Activated CD8-positive, alpha-beta T cell treated with anti-CD3 and anti-CD28 coated beads for 36 hours (primary cell): ENCODE measurements at regions of chr13 and their contacts with region 1.

Region 1: DNA sequence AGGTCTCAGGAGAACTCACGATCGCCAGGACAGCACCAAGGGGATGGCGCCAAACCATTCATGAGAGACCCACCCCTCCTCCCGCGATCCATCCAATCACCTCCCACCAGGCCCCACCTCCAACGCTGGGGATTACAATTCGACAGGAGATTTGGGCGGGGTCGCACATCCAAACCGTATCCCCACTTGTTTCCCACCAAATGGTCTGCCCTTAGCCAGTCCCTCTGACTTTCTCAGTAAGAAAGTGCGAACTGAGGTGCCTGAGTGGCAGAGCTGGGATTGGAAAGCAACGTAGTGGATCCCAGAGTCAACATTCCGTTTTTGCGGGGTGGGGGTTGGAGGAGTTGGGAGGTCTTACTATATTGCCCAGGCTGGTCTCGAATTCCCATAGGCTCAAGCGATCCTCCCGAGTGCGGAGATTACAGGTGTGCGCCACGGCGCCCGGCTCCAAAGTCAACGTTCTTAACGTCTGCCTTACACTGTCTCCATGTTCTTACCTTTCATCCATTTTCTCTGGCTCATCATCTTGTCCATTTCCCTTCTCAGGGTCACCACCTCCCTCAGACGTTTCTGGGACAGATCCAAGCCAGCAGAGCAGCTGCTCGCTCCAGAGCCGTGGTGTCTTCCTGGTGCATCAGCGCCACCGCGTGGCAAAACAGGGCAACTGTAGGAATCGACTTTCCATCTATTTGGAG is 102.7 kb upstream of the ABCC4 start:
- DNase-seq: peak; percentile 79
- ATAC-seq: peak; percentile 93
- H3K4me3 Mint-ChIP-seq: peak overlapping the region; percentile 79
- H3K27ac Mint-ChIP-seq: no peak overlapping the region
- H3K4me1 Mint-ChIP-seq: peaks cover 6% of the 10 kb centered on the region
- H3K27me3 Mint-ChIP-seq: peaks cover 7% of the 10 kb centered on the region
- CTCF ChIP-seq: peak; percentile 93

Region 2: DNA sequence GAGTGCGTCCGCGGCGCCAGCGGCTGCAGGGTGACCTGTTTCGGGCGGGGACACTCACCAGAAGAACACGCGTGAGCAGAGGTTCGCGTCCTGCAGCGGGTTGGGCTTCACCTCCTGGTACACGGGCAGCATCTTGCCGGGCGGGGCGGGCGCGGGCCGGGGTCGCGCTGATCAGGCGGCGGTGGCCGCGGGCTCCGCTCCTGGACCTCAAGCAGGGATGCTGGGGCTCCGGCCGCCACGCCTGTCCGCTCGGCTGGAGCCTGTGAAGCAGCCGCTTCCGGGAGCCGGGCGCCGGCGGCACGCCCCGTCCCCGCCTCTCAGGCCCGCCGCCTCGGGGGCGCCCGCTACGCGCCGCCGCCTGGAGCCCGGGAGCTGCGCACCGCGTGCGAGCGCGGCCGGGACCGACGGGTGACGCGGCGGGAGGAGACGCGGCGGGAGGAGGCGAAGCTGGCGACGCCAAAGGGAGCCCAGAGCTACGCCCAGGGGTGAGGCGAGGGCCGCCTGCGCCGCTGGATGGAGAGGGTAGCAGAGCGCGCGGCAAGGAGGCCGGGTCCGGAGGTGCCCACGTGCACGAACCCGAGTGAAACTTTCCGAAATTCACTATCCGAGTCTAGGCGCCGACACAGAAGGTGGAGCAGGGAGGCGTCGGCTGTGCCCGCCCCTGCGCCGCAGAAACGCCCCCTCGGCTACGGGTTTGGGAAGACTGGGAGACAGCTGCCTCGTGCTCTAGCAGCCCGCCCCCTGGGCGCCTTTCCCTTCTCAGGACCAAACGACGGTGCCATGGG is 102.6 kb before region 1 on chr13 and contains the start of gene ABCC4:
- CTCF ChIA-PET with region 1: interaction called, 23 read pairs
- POLR2A ChIA-PET with region 1: no interaction called
- intact Hi-C with region 1: no loop called
- DNase-seq: peak; percentile 52
- ATAC-seq: peak; percentile 81
- H3K4me3 Mint-ChIP-seq: peak within 1 kb of the TSS; percentile 80
- H3K27ac Mint-ChIP-seq: peak within 1 kb of the TSS; percentile 69
- H3K4me1 Mint-ChIP-seq: peaks cover 35% of the 10 kb centered on the region
- H3K27me3 Mint-ChIP-seq: no peaks in the 10 kb centered on the region
- CTCF ChIP-seq: no peak
- total RNA-seq, gene ABCC4: 9.6 to 11.8 TPM

Region 3: GRCh38 chr13:95378603-95379002 is 25.4 kb before region 1 on chr13:
- CTCF ChIA-PET with region 1: interaction called, 36 read pairs
- POLR2A ChIA-PET with region 1: interaction called, 3 read pairs
- intact Hi-C with region 1: loop called (anchors 1 kb)
- DNase-seq: no peak
- ATAC-seq: no peak
- H3K4me3 Mint-ChIP-seq: no peak overlapping the region
- H3K27ac Mint-ChIP-seq: no peak overlapping the region
- H3K4me1 Mint-ChIP-seq: peaks cover 3% of the 10 kb centered on the region
- H3K27me3 Mint-ChIP-seq: no peaks in the 10 kb centered on the region
- CTCF ChIP-seq: no peak

Region 4: GRCh38 chr13:95387733-95388207 is 16.2 kb before region 1 on chr13:
- CTCF ChIA-PET with region 1: interaction called, 36 read pairs
- POLR2A ChIA-PET with region 1: interaction called, 3 read pairs
- intact Hi-C with region 1: no loop called
- DNase-seq: no peak
- ATAC-seq: no peak
- H3K4me3 Mint-ChIP-seq: no peak overlapping the region
- H3K27ac Mint-ChIP-seq: no peak overlapping the region
- H3K4me1 Mint-ChIP-seq: no peaks in the 10 kb centered on the region
- H3K27me3 Mint-ChIP-seq: peaks cover 12% of the 10 kb centered on the region
- CTCF ChIP-seq: no peak

Region 5: GRCh38 chr13:95420501-95420900 is 16.5 kb after region 1 on chr13:
- CTCF ChIA-PET with region 1: interaction called, 44 read pairs
- POLR2A ChIA-PET with region 1: no interaction called
- intact Hi-C with region 1: no loop called
- DNase-seq: no peak
- ATAC-seq: no peak
- H3K4me3 Mint-ChIP-seq: no peak overlapping the region
- H3K27ac Mint-ChIP-seq: no peak overlapping the region
- H3K4me1 Mint-ChIP-seq: peaks cover 4% of the 10 kb centered on the region
- H3K27me3 Mint-ChIP-seq: peaks cover 4% of the 10 kb centered on the region
- CTCF ChIP-seq: no peak

Region 6: DNA sequence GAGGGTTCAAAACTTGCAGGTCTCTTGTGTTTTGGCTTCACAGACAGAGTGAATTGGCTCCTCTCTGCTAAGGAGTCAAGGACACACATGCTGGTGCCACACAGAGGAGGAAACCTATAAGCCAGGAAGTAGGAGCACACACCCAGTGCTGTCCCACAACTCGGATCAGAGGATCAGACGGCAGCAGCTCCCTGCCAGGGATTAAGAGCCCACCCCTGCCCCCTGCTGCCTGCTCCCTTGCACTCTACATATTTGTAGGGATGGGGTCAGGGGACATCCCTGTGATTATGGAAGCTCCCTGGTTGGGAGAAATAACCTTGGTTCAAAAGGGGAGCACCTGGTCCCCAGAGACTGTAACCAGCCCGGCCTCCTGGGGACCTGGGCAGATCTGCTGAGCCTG is 71.0 kb after region 1 on chr13:
- CTCF ChIA-PET with region 1: interaction called, 25 read pairs
- POLR2A ChIA-PET with region 1: no interaction called
- intact Hi-C with region 1: no loop called
- DNase-seq: no peak
- ATAC-seq: no peak
- H3K4me3 Mint-ChIP-seq: no peak overlapping the region
- H3K27ac Mint-ChIP-seq: no peak overlapping the region
- H3K4me1 Mint-ChIP-seq: peaks cover 6% of the 10 kb centered on the region
- H3K27me3 Mint-ChIP-seq: no peaks in the 10 kb centered on the region
- CTCF ChIP-seq: no peak

Region 7: GRCh38 chr13:95480131-95480545 is 76.2 kb after region 1 on chr13:
- CTCF ChIA-PET with region 1: interaction called, 25 read pairs
- POLR2A ChIA-PET with region 1: no interaction called
- intact Hi-C with region 1: no loop called
- DNase-seq: peak; percentile 14
- ATAC-seq: peak; percentile 28
- H3K4me3 Mint-ChIP-seq: no peak overlapping the region
- H3K27ac Mint-ChIP-seq: no peak overlapping the region
- H3K4me1 Mint-ChIP-seq: peaks cover 11% of the 10 kb centered on the region
- H3K27me3 Mint-ChIP-seq: no peaks in the 10 kb centered on the region
- CTCF ChIP-seq: no peak